ENCODE measurements at regions of chr17 and their contacts with region 1.

Region 1: GRCh38 chr17:29617125-29617480 is 5.6 kb downstream of the CORO6 start:
- DNase-seq: peak; percentile 97
- H3K4me3 Mint-ChIP-seq: peak overlapping the region; percentile 77
- H3K27ac Mint-ChIP-seq: peak overlapping the region; percentile 87
- H3K4me1 Mint-ChIP-seq: peaks cover 52% of the 10 kb centered on the region
- H3K27me3 Mint-ChIP-seq: peaks cover 1% of the 10 kb centered on the region

Region 2: DNA sequence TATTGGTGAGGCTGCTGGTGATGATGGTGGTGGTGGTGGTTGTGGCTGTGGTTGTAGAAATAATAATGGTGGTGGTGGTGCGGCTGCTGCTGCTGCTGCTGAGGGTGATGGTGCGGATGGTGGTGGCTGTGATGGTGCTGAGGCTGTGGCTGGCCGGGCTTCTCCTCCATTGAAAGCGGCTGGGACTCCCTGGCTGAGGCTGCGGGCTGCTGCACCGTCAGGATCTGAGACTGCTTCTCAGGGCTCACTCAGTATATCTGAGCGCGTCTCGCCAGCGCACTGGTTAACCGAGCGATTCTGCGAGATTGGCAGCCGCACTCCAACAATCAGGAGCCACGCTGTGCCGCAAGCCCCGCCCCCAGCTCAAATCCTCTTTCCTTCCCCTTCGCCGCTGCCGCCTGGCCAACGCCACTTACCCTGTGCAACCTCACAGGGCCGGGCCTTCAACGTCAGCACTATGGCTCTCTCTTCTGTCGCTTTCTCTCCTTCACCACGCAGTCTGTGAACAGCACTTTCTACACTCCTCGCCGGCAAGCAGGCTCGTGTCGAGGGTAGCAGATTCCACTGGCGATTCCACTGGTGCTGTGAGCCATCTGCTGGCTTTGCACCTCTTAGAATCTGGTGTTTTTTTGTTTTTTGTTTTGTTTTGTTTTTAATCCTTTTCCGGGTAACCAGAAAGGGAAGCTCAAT is 323.1 kb before region 1 on chr17 and contains the start of gene NUFIP2:
- CTCF ChIA-PET with region 1: interaction called, 7 read pairs
- POLR2A ChIA-PET with region 1: interaction called, 4 read pairs
- intact Hi-C with region 1: loop called (anchors 5 kb)
- DNase-seq: peak; percentile 99
- H3K4me3 Mint-ChIP-seq: peak within 1 kb of the TSS; percentile 99
- H3K27ac Mint-ChIP-seq: peak within 1 kb of the TSS; percentile 96
- H3K4me1 Mint-ChIP-seq: peaks cover 31% of the 10 kb centered on the region
- H3K27me3 Mint-ChIP-seq: no peaks in the 10 kb centered on the region
- total RNA-seq, gene NUFIP2: 45.6 to 56.9 TPM

Region 3: GRCh38 chr17:29461483-29462206 is 155.5 kb before region 1 on chr17:
- CTCF ChIA-PET with region 1: no interaction called
- POLR2A ChIA-PET with region 1: no interaction called
- intact Hi-C with region 1: no loop called
- DNase-seq: no peak
- H3K4me3 Mint-ChIP-seq: no peak overlapping the region
- H3K27ac Mint-ChIP-seq: no peak overlapping the region
- H3K4me1 Mint-ChIP-seq: peaks cover 20% of the 10 kb centered on the region
- H3K27me3 Mint-ChIP-seq: no peaks in the 10 kb centered on the region

Region 4: GRCh38 chr17:29579866-29580771 is 37.0 kb before region 1 on chr17:
- CTCF ChIA-PET with region 1: interaction called, 98 read pairs
- POLR2A ChIA-PET with region 1: interaction called, 5 read pairs
- intact Hi-C with region 1: loop called (anchors 1 kb)
- DNase-seq: peak; percentile 94
- H3K4me3 Mint-ChIP-seq: no peak overlapping the region
- H3K27ac Mint-ChIP-seq: peak overlapping the region; percentile 47
- H3K4me1 Mint-ChIP-seq: peaks cover 12% of the 10 kb centered on the region
- H3K27me3 Mint-ChIP-seq: no peaks in the 10 kb centered on the region

Region 5: DNA sequence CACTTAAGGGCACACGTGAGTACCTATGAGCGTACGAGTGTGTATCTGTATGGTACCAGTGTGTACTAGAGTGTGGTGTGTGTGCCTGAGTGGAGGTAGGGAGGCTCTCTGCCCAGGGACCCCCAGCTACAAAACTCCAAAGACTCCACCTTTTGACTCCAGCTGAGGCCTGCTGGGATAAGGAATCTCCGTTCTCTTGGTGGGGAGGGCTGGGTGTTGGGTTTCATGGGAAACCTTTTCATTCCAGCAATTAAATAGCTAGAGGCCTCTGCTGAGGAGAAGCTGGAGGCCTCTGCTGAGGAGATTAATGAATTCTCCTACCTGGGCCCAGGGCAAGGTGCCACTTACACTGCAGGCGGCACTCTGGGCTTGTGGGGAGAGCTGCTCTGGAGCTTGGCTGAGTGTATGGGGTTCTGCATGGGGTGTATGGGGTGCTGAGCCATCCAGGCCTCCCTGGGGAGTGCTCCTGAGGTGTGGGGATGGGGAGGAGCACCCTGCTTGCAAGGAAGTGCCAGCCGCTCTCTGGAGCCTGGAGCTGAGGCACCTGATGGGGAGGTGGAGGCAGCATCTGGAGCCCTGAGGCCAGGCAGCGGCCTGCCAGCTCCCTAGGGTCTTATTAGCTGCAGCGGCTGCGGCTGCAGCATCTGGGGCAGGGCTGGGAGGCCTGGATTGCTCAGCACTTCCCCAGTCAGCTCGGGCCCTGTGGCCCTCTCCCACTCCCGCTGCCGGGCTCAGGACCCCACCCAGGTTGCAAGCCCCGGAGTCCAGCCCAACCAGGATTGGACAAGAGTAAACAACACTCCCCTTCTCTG is 19.5 kb before region 1 on chr17:
- CTCF ChIA-PET with region 1: interaction called, 159 read pairs
- POLR2A ChIA-PET with region 1: interaction called, 13 read pairs
- intact Hi-C with region 1: no loop called
- DNase-seq: no peak
- H3K4me3 Mint-ChIP-seq: no peak overlapping the region
- H3K27ac Mint-ChIP-seq: no peak overlapping the region
- H3K4me1 Mint-ChIP-seq: peaks cover 14% of the 10 kb centered on the region
- H3K27me3 Mint-ChIP-seq: no peaks in the 10 kb centered on the region

Region 6: GRCh38 chr17:29640413-29640812 is 23.3 kb after region 1 on chr17:
- CTCF ChIA-PET with region 1: interaction called, 40 read pairs
- POLR2A ChIA-PET with region 1: interaction called, 6 read pairs
- intact Hi-C with region 1: no loop called
- DNase-seq: no peak
- H3K4me3 Mint-ChIP-seq: no peak overlapping the region
- H3K27ac Mint-ChIP-seq: peak overlapping the region; percentile 3
- H3K4me1 Mint-ChIP-seq: peaks cover 27% of the 10 kb centered on the region
- H3K27me3 Mint-ChIP-seq: no peaks in the 10 kb centered on the region

Region 7: DNA sequence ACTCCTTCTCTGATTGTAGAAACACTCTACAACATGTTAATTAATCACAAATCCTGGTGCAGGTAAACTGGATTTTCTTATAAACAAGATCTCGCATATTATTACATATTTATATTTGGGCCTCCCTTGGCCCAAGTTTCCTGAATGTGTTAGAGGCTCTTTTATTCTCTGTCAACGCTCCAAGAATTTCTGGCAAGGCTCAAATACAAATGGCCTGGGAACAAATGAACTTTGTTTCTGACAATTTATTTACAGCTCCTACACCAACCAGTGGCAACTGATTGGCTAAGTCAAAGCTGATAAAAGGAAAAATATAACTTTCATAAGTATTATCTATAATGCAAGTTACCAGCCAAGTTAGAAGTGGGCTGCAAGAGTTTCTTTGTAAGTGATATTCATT is 70.5 kb after region 1 on chr17:
- CTCF ChIA-PET with region 1: interaction called, 18 read pairs
- POLR2A ChIA-PET with region 1: no interaction called
- intact Hi-C with region 1: no loop called
- DNase-seq: no peak
- H3K4me3 Mint-ChIP-seq: no peak overlapping the region
- H3K27ac Mint-ChIP-seq: no peak overlapping the region
- H3K4me1 Mint-ChIP-seq: peaks cover 17% of the 10 kb centered on the region
- H3K27me3 Mint-ChIP-seq: no peaks in the 10 kb centered on the region

Region 8: DNA sequence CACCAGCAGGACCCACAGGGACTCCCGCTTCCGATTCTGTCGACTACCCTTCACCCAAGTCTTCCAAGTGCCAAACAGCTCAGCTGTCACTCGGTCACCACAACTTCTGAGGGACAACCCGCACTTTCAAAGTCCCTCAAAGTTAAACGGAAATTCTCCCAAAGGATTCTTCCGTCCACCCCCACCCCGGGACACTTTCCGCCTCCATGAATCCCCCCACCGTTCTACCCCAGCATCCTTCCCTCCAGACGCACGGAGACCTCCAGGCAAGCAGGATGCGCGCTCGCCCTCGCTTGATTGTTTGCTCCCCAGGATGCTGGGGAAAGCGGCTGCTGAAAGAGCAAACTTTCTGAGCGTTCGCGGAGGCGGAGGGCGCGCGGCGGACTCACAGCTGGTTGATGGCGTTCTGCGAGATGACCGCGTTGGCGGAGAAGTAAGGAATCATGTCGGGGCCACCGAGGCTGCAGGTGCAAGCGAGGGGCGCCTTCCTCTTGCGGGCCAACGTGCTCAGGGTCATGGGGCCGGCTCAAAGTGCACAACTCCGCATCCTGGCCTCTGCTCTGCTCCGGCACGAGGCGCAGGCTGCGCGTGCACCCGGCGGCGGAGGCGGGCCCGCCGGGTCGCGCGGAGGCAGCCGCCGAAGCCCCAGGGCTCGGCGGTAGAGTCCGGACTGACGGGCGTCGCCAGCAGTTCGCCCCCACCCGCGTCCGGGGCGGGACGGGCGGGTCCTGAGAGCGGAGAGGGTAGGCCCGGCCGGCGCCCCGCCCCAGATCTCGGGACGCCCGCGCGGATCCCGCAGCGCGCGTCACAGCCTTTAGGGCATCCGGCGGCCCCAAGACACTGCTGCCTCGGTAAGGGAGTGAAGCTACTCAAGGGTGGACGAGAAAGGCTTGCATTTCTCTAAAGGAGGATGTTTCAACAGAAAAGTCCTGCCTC is 143.9 kb after region 1 on chr17:
- CTCF ChIA-PET with region 1: interaction called, 38 read pairs
- POLR2A ChIA-PET with region 1: interaction called, 10 read pairs
- intact Hi-C with region 1: loop called (anchors 1 kb)
- DNase-seq: peak; percentile 96
- H3K4me3 Mint-ChIP-seq: peak overlapping the region; percentile 98
- H3K27ac Mint-ChIP-seq: peak overlapping the region; percentile 99
- H3K4me1 Mint-ChIP-seq: peaks cover 28% of the 10 kb centered on the region
- H3K27me3 Mint-ChIP-seq: no peaks in the 10 kb centered on the region

Region 9: GRCh38 chr17:29909236-29910003 is 292.3 kb after region 1 on chr17:
- CTCF ChIA-PET with region 1: no interaction called
- POLR2A ChIA-PET with region 1: no interaction called
- intact Hi-C with region 1: no loop called
- DNase-seq: no peak
- H3K4me3 Mint-ChIP-seq: no peak overlapping the region
- H3K27ac Mint-ChIP-seq: no peak overlapping the region
- H3K4me1 Mint-ChIP-seq: peaks cover 23% of the 10 kb centered on the region
- H3K27me3 Mint-ChIP-seq: no peaks in the 10 kb centered on the region

Measured in activated CD4-positive, alpha-beta memory T cell treated with anti-CD3 and anti-CD28 coated beads for 36 hours (primary cell).